ENCODE measurements at regions of chr14 and their contacts with region 1.

Region 1: GRCh38 chr14:75126679-75127473 is at the start of gene NEK9:
- DNase-seq: peak; percentile 78 to 91 (median 87)
- ATAC-seq: peak; percentile 92
- H3K4me3 ChIP-seq: peak within 1 kb of the TSS; percentile 87
- H3K4me3 Mint-ChIP-seq: peak within 1 kb of the TSS; percentile 87 to 99 (median 96)
- H3K27ac ChIP-seq: peak within 1 kb of the TSS; percentile 89
- H3K27ac Mint-ChIP-seq: peak within 1 kb of the TSS; percentile 95 to 98 (median 98)
- H3K4me1 ChIP-seq: peaks cover 22 to 29% of the 10 kb centered on the region in 2 donors
- H3K4me1 Mint-ChIP-seq: peaks cover 36 to 48% (median 44%) of the 10 kb centered on the region in 7 donors
- H3K27me3 ChIP-seq: no peaks in the 10 kb centered on the region
- H3K27me3 Mint-ChIP-seq: no peaks in the 10 kb centered on the region
- total RNA-seq, gene NEK9: 81.7 to 141 (median 84.7) TPM

Region 2: GRCh38 chr14:75372260-75372659 is 245.4 kb after region 1 on chr14:
- CTCF ChIA-PET with region 1: no interaction called
- POLR2A ChIA-PET with region 1: no interaction called
- intact Hi-C with region 1: no loop called
- DNase-seq: no peak
- ATAC-seq: no peak
- H3K4me3 ChIP-seq: no peak overlapping the region
- H3K4me3 Mint-ChIP-seq: no peak overlapping the region
- H3K27ac ChIP-seq: no peak overlapping the region
- H3K27ac Mint-ChIP-seq: no peak overlapping the region
- H3K4me1 ChIP-seq: no peaks in the 10 kb centered on the region
- H3K4me1 Mint-ChIP-seq: peaks cover 0 to 1% (median 0%) of the 10 kb centered on the region in 7 donors
- H3K27me3 ChIP-seq: no peaks in the 10 kb centered on the region
- H3K27me3 Mint-ChIP-seq: peaks cover 5 to 23% (median 7%) of the 10 kb centered on the region in 5 donors

Region 3: DNA sequence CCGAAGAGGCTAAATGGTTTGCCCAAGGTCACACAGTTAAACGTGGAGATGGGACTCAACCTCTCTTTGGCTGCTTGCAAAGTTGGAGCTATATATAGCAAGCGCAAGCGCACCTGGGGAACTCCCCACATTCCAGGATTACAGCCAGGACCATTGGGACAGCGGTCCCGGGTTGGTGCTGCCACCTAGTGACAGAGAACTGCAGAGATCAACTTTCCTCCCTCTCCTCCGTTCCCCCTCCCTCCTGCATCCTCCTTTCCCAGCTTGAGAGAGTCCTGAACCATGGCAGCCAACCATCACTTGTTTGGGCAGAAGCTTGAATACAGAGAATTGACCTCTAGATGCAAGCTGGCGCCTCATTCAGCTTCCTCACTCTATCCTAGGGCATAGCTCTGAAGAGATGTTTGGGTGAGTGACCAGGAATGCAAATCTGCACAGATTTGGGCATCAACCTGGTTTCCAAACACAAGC is 434.1 kb after region 1 on chr14:
- CTCF ChIA-PET with region 1: no interaction called
- POLR2A ChIA-PET with region 1: no interaction called
- intact Hi-C with region 1: loop called in 1 of 2 experiments (anchors 5 kb)
- DNase-seq: peak in 4 of 9 donors; percentile 19 to 54 (median 28)
- ATAC-seq: peak; percentile 82
- H3K4me3 ChIP-seq: no peak overlapping the region
- H3K4me3 Mint-ChIP-seq: peak overlapping the region in 7 of 10 donors; percentile 18 to 77 (median 40)
- H3K27ac ChIP-seq: no peak overlapping the region
- H3K27ac Mint-ChIP-seq: peak overlapping the region in 6 of 9 donors; percentile 12 to 68 (median 48)
- H3K4me1 ChIP-seq: peaks cover 4 to 8% of the 10 kb centered on the region in 2 donors
- H3K4me1 Mint-ChIP-seq: peaks cover 17 to 62% (median 39%) of the 10 kb centered on the region in 7 donors
- H3K27me3 ChIP-seq: no peaks in the 10 kb centered on the region
- H3K27me3 Mint-ChIP-seq: no peaks in the 10 kb centered on the region